H1 (cell line): ENCODE measurements at regions of chr22 and their contacts with region 1.

Region 1: DNA sequence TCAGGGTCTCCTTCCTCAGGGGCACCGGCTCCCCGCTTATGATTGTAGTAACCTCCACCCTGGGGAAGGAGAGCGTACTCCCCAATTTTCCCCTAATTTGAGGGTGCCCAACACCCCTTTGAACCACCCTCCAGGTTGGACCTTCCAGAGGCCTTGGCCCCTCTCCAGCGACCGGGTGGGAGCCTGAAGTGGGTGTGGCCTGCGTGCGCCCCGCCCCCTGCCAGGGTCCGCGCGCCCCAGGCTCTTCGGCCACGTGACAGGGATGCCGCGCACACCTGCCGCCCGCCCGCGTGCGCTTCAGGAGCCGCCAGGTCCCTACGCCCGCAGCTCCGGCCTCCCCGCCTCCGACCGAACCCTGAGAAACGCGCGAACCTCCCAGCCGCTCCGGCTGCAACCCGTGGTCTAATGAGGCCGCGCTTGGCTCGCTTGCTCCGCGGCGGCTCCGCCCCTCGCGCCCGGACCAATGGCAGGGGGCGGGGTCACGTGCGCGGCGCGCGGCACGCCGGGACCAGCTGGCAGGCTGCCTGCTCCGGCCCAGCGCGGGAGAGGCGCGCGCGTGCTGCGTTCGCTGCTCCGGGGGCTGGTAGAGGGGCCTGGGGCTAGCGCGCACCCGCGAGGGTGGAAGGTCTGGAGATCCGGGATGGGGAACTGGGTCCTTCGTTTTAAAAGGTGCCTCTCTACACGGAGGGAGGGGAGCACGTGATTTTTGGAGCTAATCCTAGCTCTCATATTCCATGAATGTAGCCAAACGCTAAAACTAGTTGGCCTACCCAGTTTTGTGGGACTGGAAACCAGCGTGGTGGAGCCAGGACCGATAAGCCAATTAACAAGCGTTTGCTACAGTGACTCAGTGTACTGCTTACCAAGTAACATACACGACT is at the start of gene FOXRED2:
- DNase-seq: peak; percentile 39 to 94
- H3K4me3 ChIP-seq: peak within 1 kb of the TSS in 3 of 4 experiments; percentile 33 to 58 (median 39); a peak in 6 of 8 replicates
- H3K27ac ChIP-seq: no peak within 1 kb of the TSS; the same call in 1 of the 2 replicates
- H3K4me1 ChIP-seq: peaks cover 0 to 5% (median 0%) of the 10 kb centered on the region in 4 experiments; a peak in 1 of 7 replicates
- H3K27me3 ChIP-seq: peaks cover 0 to 11% (median 6%) of the 10 kb centered on the region in 4 experiments; a peak in 4 of 7 replicates
- CTCF ChIP-seq: 0 out of 4 replicates have a peak, but pooled peaks of 1 of the 3 experiments have one; percentile 0
- EP300 ChIP-seq: no peak
- POLR2A ChIP-seq: peak in 1 of 2 experiments; percentile 72; a peak in 2 of 3 replicates
- RAD21 ChIP-seq: no peak
- total RNA-seq, gene FOXRED2: 27.8 and 31.5 TPM in 2 replicates

Region 2: DNA sequence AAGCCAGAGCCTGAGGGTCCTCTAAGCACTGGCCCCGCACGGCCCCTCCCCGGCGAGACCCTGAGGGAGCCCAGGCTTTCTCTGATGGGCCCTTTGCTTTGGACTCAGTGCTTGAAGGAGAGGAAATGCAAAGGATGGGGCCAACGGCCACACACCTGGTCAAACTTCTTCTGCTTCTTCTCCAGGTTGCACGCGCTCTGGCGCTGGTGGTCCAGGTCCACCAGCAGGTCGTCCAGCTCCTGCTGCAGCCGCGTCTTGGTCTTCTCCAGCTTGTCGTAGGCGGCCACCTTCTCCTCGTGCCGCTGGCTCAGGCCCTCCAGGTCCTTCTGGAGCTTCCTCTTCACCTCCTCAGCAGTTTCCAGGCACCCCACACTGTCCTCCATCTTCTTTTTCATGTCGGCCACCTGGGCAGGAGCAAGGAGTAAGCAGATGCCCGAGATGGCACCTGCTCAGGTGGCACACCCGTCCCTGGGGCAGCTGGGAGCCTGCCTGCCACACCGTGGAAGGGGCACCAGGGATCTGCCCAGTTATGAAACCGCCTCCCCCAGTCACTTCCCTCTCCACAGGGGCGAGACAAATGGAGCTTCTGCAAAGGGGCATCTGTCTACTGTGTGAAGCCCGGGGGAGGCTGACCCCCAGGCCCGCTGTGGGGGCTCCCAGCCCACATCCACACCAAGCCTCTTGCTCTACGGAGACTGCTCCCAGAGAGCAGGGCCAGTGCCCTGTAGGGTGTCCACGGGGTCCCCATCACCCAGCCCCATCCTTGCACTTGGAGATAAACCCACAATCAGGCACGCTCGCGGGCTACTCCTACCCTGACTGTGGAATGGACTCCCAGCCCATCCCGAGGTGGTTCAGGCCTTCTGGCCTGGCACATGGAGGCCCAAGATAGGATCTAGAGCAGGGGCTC is 214.8 kb before region 1 on chr22:
- CTCF ChIA-PET with region 1: interaction called, 11 read pairs
- POLR2A ChIA-PET with region 1: no interaction called
- DNase-seq: no peak
- H3K4me3 ChIP-seq: no peak overlapping the region
- H3K27ac ChIP-seq: no peak overlapping the region
- H3K4me1 ChIP-seq: no peaks in the 10 kb centered on the region
- H3K27me3 ChIP-seq: no peaks in the 10 kb centered on the region
- CTCF ChIP-seq: no peak
- EP300 ChIP-seq: no peak
- POLR2A ChIP-seq: no peak
- RAD21 ChIP-seq: no peak

Region 3: DNA sequence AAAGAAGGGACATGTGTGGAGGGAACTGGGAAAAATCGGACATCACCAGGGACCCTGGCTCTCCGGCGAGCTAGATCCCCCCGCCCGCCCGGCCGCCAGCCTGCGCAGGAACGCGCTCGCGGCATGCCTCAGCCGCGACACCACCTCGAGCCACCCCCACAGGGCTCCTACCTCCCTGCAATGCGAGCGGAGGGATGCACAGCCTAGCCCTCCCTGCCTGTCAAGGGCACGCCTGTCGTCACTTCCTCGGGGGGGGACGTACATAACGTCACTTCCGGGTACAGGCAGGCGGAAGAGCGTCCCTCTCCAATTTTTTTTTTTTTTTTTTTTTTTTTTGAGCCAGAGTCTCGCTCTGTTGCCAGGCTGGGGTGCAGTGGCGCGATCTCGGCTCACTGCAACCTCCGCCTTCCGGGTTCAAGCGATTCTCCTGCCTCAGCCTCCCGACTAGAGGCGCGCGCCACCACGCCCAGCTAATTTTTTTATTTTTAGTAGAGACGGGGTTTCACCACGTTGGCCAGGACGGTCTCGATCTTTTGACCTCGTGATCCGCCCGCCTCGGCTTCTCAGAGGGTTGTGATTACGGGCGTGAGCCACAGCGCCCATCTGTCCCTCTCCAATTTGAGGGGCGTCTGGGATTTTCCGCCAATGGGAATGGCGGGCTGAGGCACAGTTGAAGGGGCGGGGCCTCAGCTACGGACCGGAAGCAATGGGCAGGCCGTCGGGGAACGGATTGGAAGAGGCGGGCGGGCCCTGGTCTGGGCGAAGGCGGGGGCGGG is 25.3 kb before region 1 on chr22 and contains the start of gene TXN2:
- CTCF ChIA-PET with region 1: interaction called, 15 read pairs
- POLR2A ChIA-PET with region 1: interaction called, 10 read pairs
- DNase-seq: peak; percentile 77 to 92
- H3K4me3 ChIP-seq: peak within 1 kb of the TSS; percentile 58 to 97 (median 71)
- H3K27ac ChIP-seq: peak within 1 kb of the TSS; percentile 60
- H3K4me1 ChIP-seq: peaks cover 0 to 5% (median 2%) of the 10 kb centered on the region in 4 experiments; a peak in 4 of 7 replicates
- H3K27me3 ChIP-seq: peaks cover 0 to 7% (median 5%) of the 10 kb centered on the region in 4 experiments; a peak in 5 of 7 replicates
- CTCF ChIP-seq: no peak
- EP300 ChIP-seq: no peak
- POLR2A ChIP-seq: peak; percentile 81 to 91
- RAD21 ChIP-seq: no peak
- total RNA-seq, gene TXN2: 47.5 and 53.8 TPM in 2 replicates

Region 4: DNA sequence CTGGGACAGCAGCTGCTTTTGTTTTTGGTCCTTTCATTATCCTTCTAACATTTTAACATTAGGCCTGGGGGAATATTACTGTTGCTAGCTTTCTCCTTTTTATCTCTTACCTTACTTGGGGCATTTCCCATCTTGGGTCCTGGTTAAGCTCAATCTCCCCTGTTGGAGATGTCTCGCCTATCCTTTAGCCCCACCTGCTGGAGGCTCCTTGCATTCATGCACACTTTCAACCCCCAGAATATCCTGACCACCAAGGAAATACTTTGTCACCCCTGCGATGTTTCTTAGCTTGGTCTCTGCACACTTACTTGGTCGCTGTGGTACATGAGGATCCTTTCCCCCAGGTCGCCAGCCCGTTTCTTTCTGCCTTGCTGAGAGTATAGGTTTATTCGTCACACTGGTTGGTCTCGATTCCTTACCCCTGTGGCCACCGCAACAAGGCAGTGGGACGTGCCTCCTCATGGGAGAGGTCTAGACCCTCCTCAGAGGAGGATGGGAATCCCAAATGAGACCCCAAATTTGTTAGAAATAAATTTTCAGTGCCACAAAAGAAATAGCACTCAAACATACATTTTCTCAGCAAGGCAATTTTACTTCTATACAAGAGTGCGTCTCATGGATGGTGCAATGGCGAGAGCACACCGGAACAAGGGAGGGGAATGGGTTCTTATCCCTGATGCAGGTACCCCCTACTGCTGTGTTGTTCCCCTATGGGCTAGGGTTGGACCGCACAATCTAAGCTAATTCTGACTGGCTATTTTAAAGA is 20.1 kb before region 1 on chr22:
- CTCF ChIA-PET with region 1: interaction called, 15 read pairs
- POLR2A ChIA-PET with region 1: interaction called, 10 read pairs
- DNase-seq: peak in 1 of 2 experiments; percentile 85
- H3K4me3 ChIP-seq: no peak overlapping the region
- H3K27ac ChIP-seq: no peak overlapping the region
- H3K4me1 ChIP-seq: no peaks in the 10 kb centered on the region; a peak in 1 of 7 replicates
- H3K27me3 ChIP-seq: peaks cover 0 to 7% (median 5%) of the 10 kb centered on the region in 4 experiments; a peak in 5 of 7 replicates
- CTCF ChIP-seq: peak; percentile 70 to 86 (median 83)
- EP300 ChIP-seq: no peak
- POLR2A ChIP-seq: no peak
- RAD21 ChIP-seq: peak; percentile 83 to 91

Region 5: GRCh38 chr22:36520423-36520822 is 13.5 kb after region 1 on chr22:
- CTCF ChIA-PET with region 1: interaction called, 63 read pairs
- POLR2A ChIA-PET with region 1: interaction called, 92 read pairs
- DNase-seq: no peak
- H3K4me3 ChIP-seq: no peak overlapping the region
- H3K27ac ChIP-seq: no peak overlapping the region
- H3K4me1 ChIP-seq: no peaks in the 10 kb centered on the region
- H3K27me3 ChIP-seq: no peaks in the 10 kb centered on the region
- CTCF ChIP-seq: no peak
- EP300 ChIP-seq: no peak
- POLR2A ChIP-seq: no peak
- RAD21 ChIP-seq: no peak

Region 6: DNA sequence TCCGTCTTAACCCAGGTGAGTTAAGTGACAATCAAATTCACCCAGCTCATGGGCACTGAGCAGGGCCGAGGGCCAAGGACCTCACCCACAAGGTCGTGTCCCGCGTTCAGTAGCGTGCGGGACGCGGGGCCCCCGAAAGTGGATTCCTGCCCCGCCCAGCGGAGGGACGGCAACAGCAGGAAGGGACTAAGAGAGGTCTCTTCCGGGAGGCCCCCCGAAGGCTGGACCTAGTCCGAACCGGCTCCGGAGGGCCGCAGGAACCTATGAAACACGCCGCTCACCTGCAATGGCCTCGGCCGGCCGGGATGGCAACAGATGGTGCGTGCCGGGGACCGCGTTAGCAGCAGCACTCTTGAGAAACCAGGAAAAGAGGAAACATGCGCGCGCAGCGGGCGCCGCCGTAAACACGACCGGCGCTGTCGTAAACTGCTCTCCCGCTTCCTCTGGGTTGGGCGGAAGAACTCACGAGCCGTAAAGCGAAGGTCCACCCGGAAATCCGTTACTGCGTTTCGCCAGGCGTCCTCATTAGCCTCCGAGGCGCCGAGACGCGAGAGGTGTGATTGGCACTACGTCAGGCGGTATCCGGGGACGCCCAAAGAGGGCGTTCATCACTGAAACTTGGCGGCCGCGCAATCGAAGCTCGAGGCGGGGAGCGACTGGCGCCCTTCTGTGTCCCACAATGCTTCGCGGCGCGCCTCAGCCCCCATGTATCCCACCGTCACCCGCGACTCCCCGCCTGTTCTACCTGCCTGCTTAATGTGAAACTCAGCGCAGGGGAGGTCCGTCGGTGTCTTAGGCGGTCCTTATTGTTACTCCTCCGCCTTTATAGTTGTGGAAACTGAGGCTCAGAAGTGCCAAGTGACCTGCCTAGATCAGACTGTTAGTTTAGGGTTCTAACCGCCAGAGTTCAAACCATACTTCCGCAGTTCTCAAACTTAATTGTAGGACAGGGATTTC is 22.2 kb after region 1 on chr22 and contains the start of gene EIF3D:
- CTCF ChIA-PET with region 1: interaction called, 63 read pairs
- POLR2A ChIA-PET with region 1: interaction called, 92 read pairs
- DNase-seq: peak; percentile 98 to 99
- H3K4me3 ChIP-seq: peak within 1 kb of the TSS; percentile 91 to 98 (median 94)
- H3K27ac ChIP-seq: peak within 1 kb of the TSS; percentile 80
- H3K4me1 ChIP-seq: no peaks in the 10 kb centered on the region; a peak in 1 of 7 replicates
- H3K27me3 ChIP-seq: no peaks in the 10 kb centered on the region
- CTCF ChIP-seq: 0 out of 4 replicates have a peak, but pooled peaks of 1 of the 3 experiments have one; percentile 4
- EP300 ChIP-seq: no peak
- POLR2A ChIP-seq: peak; percentile 48 to 89
- RAD21 ChIP-seq: no peak
- total RNA-seq, gene EIF3D: 195 and 196 TPM in 2 replicates